Breast epithelium (tissue), 4 donors: ENCODE measurements at regions of chr10 and their contacts with region 1.

Region 1: DNA sequence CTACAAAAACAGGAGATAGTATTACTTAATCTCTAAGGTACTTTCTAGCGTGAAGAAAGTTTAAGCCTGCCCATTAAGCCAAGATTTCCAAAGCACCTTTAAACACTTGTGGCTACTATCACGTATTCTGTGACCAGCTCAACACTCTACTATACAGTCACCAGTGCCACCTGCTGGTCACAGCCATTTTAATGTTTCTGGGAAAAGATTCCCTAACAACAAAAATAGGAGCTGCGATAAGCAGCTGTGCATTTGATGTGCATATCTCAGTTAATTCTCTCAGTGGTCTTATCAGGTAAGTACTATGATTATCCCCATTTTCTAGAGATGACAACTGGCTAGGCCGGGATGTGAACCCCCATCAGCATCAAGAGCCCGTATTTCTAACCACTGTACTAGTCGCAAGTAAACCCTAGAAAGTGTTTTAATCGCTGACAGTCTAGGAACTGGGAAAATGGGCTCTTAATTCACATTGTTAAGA is 860 bp downstream of the SEC31B start:
- DNase-seq: peak; percentile 51 to 59
- H3K4me3 ChIP-seq: peak overlapping the region; percentile 38 to 54 (median 40)
- H3K27ac ChIP-seq: no peak overlapping the region
- H3K4me1 ChIP-seq: no peaks in the 10 kb centered on the region
- H3K27me3 ChIP-seq: no peaks in the 10 kb centered on the region
- CTCF ChIP-seq: peak; percentile 49 to 66 (median 64)
- POLR2A ChIP-seq: no peak

Region 2: DNA sequence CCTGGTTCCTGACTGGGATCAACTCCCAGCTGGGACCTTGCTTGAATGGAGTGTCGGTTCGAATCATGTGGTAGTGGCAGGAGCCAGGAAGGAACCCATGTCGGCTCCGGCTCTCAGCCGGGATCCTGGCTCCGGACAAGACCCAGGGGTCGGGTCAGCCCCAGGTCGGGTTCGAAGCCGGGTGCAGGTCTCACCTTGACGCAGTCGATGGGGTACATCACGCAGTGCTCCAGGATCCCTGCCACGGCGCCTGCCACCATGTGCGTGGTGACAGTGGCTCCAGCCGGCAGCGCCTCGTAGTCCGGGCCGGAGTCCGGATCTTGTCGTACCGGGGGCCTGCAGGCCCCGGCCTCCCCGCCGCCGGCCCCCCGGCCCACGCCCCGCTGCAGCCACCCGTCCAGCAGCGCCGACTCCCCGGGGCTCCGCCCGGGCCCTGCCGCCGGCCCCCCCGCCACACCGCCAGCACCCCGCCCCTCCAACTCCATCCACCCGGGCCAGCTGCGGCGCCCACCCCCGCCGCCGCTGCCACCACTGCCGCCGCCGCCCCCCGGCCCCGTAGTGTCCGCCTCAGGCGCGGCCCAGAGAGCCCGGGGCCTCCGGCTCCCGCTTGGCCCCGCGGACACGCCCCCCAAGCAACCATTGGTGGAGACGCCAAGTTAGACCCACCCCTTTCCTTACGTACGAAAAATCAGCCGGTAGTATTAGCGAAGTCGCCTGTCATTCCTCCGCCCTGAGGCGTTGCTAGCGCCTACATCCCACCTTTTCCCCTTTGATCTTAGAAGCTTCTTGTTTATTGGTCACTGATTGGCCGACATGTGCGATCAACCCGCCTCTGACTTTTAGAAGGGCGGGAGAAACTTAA is 898.7 kb before region 1 on chr10 and contains the start of gene SLC25A28:
- intact Hi-C with region 1: loop called (anchors 10 kb)
- DNase-seq: peak; percentile 96 to 99
- H3K4me3 ChIP-seq: peak within 1 kb of the TSS; percentile 87 to 90 (median 88)
- H3K27ac ChIP-seq: peak within 1 kb of the TSS; percentile 97 to 98
- H3K4me1 ChIP-seq: peaks cover 0 to 29% of the 10 kb centered on the region in 2 donors
- H3K27me3 ChIP-seq: no peaks in the 10 kb centered on the region
- CTCF ChIP-seq: no peak
- POLR2A ChIP-seq: no peak
- total RNA-seq, gene SLC25A28: 29.1 to 35.1 (median 33.1) TPM

Region 3: DNA sequence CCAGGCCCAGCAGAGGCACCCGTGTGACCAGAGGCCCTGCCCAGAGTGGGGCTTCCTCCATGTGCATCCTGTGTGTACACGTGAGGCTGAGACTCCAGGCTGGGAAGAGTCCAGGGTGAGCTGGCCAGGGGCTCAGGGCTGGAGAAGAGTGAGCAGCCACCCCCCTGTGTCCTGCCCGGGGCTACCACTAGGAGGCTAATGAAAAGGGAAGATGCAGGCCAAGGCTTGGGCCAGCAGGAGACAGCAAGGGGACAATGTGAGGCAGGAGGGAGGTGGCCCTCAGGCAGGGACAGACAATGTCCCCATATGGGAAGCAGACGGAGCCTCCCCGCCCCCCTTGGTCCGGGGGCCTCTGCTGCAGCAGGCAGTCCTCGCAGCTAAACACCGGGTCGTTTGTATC is 119.0 kb after region 1 on chr10:
- intact Hi-C with region 1: no loop called
- DNase-seq: no peak
- H3K4me3 ChIP-seq: no peak overlapping the region
- H3K27ac ChIP-seq: no peak overlapping the region
- H3K4me1 ChIP-seq: no peaks in the 10 kb centered on the region
- H3K27me3 ChIP-seq: peaks cover 0 to 59% of the 10 kb centered on the region in 2 donors
- CTCF ChIP-seq: no peak
- POLR2A ChIP-seq: no peak